ENCODE measurements at regions of chr17 and their contacts with region 1.

Region 1: GRCh38 chr17:50949989-50950881 is 84.1 kb upstream of the TOB1 start:
- ATAC-seq: peak; percentile 61 to 87 (median 78)
- H3K4me3 ChIP-seq: no peak overlapping the region
- H3K27ac ChIP-seq: peak overlapping the region in 1 of 2 donors; percentile 28
- H3K4me1 ChIP-seq: peaks cover 35 to 43% of the 10 kb centered on the region in 2 donors

Region 2: DNA sequence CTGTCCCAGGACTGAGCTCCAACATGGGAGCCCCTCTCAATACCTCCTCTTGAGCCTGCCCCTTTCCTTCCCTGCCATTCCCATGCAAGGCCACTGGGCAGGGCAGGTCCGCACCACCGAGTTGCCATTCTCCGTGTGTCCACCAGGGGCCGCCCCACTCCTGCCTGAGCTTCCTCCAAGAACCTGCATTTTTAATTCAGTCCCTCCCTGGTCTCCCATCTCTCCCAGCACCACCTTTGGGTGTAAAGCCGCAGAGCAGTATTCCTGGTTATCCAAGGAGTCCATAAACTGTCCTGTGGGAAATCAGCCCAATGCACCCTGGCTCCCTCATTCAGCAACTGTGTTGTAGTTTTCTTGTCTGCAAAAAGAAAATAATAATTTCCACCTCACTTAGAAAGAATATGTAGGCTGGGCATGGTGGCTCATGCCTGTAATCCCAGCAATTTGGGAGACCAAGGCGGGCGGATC is 167.0 kb before region 1 on chr17:
- in situ Hi-C with region 1: loop called in 2 of 9 experiments (anchors 10 kb)
- ATAC-seq: peak; percentile 76 to 95 (median 90)
- H3K4me3 ChIP-seq: no peak overlapping the region
- H3K27ac ChIP-seq: no peak overlapping the region
- H3K4me1 ChIP-seq: no peaks in the 10 kb centered on the region

Region 3: DNA sequence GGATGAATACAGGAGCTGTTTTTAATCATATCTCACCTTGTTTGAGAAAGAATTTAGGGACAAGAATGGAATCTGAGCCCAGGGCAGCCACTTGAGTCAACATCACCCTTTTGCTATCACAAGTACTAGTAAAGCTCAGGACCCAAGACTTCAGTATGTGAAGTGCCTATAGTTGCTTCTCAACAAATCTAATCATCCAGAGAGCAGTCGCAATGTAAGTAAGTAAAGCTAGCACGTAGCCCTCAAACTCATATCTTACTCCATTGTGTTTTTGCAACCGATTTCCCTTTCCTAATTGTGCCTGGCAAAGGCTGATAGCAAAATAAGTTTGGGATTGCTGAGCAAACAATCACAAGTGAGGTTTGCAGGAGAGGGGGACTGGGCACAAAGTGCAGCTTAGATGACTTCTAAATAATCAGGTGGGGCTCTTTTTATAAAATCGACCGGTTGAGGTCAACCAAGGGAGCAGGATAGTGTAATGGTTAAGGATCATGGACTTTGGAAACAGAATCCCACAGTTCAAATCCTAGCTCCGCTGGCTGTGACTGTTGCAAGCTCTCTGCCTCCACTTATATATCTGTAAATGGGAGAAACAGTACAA is 97.1 kb before region 1 on chr17:
- in situ Hi-C with region 1: loop called in 5 of 9 experiments (anchors 10 to 25 kb)
- ATAC-seq: no peak
- H3K4me3 ChIP-seq: no peak overlapping the region
- H3K27ac ChIP-seq: no peak overlapping the region
- H3K4me1 ChIP-seq: peaks cover 2 to 7% of the 10 kb centered on the region in 2 donors

Region 4: GRCh38 chr17:50865984-50866774 is 84.1 kb before region 1 on chr17 and contains the start of gene TOB1:
- in situ Hi-C with region 1: loop called in 6 of 9 experiments (anchors 10 to 25 kb)
- ATAC-seq: peak; percentile 58 to 81 (median 77)
- H3K4me3 ChIP-seq: peak within 1 kb of the TSS; percentile 59 to 93 (median 80)
- H3K27ac ChIP-seq: peak within 1 kb of the TSS; percentile 94
- H3K4me1 ChIP-seq: peaks cover 22 to 31% of the 10 kb centered on the region in 2 donors
- total RNA-seq, gene TOB1: 11.9 to 69.3 (median 26.0) TPM